ENCODE measurements at regions of chr6 and their contacts with region 1.

Region 1: GRCh38 chr6:52125139-52125538 is 37.7 kb upstream of the PKHD1 start:
- DNase-seq: no peak
- H3K4me3 Mint-ChIP-seq: no peak overlapping the region
- H3K27ac Mint-ChIP-seq: no peak overlapping the region
- H3K4me1 Mint-ChIP-seq: peaks cover 1% of the 10 kb centered on the region
- H3K27me3 Mint-ChIP-seq: no peaks in the 10 kb centered on the region
- CTCF ChIP-seq: no peak

Region 2: GRCh38 chr6:51827580-51827979 is 297.6 kb before region 1 on chr6:
- CTCF ChIA-PET with region 1: no interaction called
- POLR2A ChIA-PET with region 1: no interaction called
- intact Hi-C with region 1: no loop called
- DNase-seq: no peak
- H3K4me3 Mint-ChIP-seq: no peak overlapping the region
- H3K27ac Mint-ChIP-seq: no peak overlapping the region
- H3K4me1 Mint-ChIP-seq: no peaks in the 10 kb centered on the region
- H3K27me3 Mint-ChIP-seq: no peaks in the 10 kb centered on the region
- CTCF ChIP-seq: no peak

Region 3: DNA sequence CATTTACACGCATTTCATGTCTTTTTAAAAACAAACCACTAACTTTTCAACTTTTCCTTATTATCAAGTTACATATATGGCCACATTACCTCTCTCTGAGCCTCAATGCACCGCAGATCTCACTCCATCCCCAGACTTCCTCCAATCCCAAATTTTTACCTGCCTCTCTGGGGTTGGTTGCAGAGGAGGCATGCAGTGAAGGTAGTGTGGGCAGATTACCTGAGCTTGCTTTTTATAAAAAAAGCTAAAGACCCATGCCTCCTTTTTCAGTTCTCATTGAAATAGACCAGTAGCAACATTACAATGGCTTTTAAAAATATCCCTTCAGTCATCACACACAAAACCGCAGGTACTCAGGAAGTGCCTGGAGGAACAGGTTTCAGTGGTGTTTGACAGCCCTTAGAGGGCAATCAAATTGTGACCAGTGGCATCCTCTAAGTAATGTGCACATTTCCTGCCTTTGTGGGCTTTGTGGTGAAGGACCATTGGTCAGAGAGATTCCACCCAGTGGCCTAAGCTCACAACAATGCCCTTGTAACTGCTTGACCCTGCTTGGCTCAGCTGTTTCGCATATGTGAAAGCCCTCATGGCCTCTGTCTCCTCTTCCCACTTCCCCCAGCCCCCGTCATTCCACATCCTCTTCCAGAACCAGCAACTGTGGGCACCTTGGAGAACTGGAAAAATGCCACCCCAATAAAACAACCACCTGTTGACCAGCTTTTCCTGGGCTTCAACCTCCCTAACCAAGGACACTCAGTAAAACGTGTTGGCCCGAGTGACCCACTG is 30.8 kb after region 1 on chr6:
- CTCF ChIA-PET with region 1: interaction called, 11 read pairs
- POLR2A ChIA-PET with region 1: interaction called, 3 read pairs
- intact Hi-C with region 1: no loop called
- DNase-seq: no peak
- H3K4me3 Mint-ChIP-seq: no peak overlapping the region
- H3K27ac Mint-ChIP-seq: no peak overlapping the region
- H3K4me1 Mint-ChIP-seq: peaks cover 31% of the 10 kb centered on the region
- H3K27me3 Mint-ChIP-seq: no peaks in the 10 kb centered on the region
- CTCF ChIP-seq: no peak

Measured in MCF 10A (cell line).